Mammary epithelial cell (primary cell): ENCODE measurements at regions of chr3 and their contacts with region 1.

Region 1: DNA sequence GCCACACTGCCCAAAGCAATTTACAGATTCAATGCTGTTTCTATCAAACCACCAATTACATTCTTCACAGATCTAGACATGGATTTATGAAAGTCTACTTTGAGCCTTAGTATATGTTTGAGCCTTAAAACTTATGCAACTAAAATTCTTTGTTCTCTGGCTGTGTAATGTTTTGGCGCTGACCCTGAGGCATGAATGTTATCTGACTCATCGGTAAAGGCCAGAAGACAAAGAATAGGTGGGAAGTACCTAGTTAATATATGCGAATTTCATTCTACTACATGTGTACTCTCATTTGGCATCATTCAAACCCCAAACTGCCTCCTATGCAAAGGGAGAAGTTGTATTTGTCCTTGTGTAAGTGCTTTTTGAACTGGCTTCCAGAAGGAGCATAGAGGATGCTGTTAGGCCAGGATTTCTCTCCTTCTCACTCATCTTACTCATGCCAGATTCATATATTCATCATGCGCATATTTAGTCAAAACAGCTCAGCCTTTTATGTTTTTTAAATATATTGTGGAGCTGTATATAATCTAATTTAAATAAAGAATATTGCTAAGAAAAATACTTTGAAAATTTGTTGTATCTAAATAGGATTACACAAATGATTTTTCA is 204.2 kb downstream of the NFKBIZ start:
- DNase-seq: peak; percentile 92
- H3K4me3 ChIP-seq: no peak overlapping the region
- H3K27ac ChIP-seq: peak overlapping the region; percentile 39
- H3K4me1 ChIP-seq: peaks cover 14% of the 10 kb centered on the region
- H3K27me3 ChIP-seq: no peaks in the 10 kb centered on the region
- CTCF ChIP-seq: no peak

Region 2: GRCh38 chr3:101902041-101902440 is 151.4 kb before region 1 on chr3:
- CTCF ChIA-PET with region 1: no interaction called
- dilution Hi-C with region 1: no loop called
- in situ Hi-C with region 1: no loop called
- intact Hi-C with region 1: loop called (anchors 10 kb)
- DNase-seq: peak; percentile 98
- H3K4me3 ChIP-seq: no peak overlapping the region
- H3K27ac ChIP-seq: peak overlapping the region; percentile 78
- H3K4me1 ChIP-seq: peaks cover 6% of the 10 kb centered on the region
- H3K27me3 ChIP-seq: no peaks in the 10 kb centered on the region
- CTCF ChIP-seq: no peak

Region 3: DNA sequence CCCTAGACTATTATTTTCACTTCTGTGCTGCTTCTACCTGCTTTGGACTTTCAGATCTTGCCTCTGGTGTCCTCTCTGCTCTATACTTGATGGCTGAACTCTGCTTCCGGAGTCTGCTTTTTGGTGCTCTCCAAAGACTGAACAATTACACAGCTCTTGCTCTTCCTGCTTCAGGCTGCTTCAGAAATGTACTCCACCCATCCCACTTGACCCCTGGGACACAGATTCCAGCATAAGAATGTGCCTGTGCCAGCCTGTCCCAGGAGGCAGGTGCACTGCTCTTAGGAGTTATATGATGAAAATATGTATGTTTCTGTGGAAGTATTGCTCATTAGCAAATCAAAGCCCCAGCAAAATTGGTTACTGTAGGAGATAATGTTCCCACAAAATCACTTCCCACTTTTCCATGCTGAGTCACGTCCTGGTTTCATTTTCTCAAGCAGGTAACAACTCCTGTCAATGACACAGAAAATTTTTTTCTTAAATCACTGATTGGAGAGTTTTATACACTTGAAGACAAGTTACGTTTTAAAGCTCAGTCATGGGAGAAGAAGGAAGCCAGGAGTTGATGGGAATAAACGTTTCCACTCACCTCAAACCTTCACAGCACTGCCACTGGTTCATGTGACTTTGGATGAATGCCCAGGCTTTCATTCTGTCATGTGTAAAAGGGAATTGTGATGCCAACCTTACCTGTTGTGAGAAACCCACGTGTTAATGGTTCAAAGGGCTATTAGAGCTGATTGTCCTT is 141.9 kb after region 1 on chr3:
- CTCF ChIA-PET with region 1: no interaction called
- dilution Hi-C with region 1: no loop called
- in situ Hi-C with region 1: no loop called
- intact Hi-C with region 1: loop called (anchors 10 kb)
- DNase-seq: peak; percentile 96
- H3K4me3 ChIP-seq: no peak overlapping the region
- H3K27ac ChIP-seq: peak overlapping the region; percentile 94
- H3K4me1 ChIP-seq: peaks cover 62% of the 10 kb centered on the region
- H3K27me3 ChIP-seq: no peaks in the 10 kb centered on the region
- CTCF ChIP-seq: no peak